MCF 10A (cell line): ENCODE measurements at regions of chr20 and their contacts with region 1.

Region 1: GRCh38 chr20:35699127-35699975 is at the starts of genes NFS1 and ROMO1:
- DNase-seq: peak; percentile 85
- H3K4me3 Mint-ChIP-seq: peak within 1 kb of the TSS; percentile 98
- H3K27ac Mint-ChIP-seq: peak within 1 kb of the TSS; percentile 99
- H3K4me1 Mint-ChIP-seq: peaks cover 19% of the 10 kb centered on the region
- H3K27me3 Mint-ChIP-seq: no peaks in the 10 kb centered on the region
- CTCF ChIP-seq: no peak
- total RNA-seq, gene NFS1: 27.6 and 28.6 TPM in 2 replicates
- total RNA-seq, gene ROMO1: 173 and 192 TPM in 2 replicates

Region 2: DNA sequence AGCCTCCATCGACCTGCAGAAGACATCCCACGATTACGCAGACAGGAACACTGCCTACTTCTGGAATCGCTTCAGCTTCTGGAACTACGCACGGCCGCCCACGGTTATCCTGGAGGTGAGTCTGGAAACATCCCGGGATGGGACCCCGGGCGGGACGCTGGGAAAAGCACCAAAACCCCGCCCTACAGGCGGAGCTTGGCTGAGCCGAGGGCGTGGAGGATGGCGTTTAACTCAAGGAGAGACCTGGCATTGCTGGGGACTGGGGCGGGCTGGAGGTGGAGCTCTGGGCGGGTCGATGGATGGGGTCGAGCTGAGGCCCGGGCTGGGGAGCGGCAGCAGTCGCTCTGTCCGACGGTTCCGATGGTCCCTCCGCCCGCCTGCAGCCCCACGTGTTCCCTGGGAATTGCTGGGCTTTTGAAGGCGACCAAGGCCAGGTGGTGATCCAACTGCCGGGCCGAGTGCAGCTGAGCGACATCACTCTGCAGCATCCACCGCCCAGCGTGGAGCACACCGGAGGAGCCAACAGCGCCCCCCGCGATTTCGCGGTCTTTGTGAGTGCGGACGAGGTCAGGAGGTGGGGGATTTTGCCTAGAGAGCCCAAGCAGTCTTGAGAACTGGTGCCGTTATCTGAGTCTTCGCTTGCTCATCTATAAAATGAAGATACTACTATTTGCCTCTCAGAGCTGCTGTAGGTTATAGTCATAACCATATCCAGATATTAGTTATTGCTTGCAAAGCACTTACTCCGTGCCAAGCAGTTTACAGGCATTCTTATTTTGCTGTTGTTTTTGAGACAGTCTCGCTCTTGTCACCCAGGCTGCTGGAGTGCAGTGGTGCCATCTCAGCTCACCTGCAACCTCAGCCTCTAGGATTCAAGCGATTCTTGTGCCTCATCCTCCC is 79.9 kb before region 1 on chr20:
- CTCF ChIA-PET with region 1: no interaction called
- POLR2A ChIA-PET with region 1: interaction called, 11 read pairs
- intact Hi-C with region 1: no loop called
- DNase-seq: peak; percentile 91
- H3K4me3 Mint-ChIP-seq: peak overlapping the region; percentile 87
- H3K27ac Mint-ChIP-seq: no peak overlapping the region
- H3K4me1 Mint-ChIP-seq: peaks cover 12% of the 10 kb centered on the region
- H3K27me3 Mint-ChIP-seq: no peaks in the 10 kb centered on the region
- CTCF ChIP-seq: no peak

Region 3: DNA sequence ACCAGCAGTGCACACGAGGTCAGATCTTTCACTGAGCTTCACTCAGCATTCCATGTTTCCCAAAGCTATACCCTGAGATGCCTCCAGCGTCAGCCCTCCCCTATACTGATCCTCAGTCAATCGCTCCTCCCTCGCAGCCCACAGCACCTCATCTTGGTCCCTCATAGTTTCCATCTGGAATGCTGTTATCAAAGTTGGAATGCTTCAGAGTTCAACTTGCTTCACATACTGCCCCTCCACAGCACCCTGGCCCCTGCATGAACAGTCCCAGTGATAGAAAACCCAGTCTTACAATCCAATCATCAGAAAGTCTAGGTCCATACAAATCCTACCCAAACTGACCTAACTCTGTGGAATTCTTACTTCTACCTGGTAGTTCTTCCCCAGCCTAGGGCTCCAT is 63.7 kb before region 1 on chr20:
- CTCF ChIA-PET with region 1: no interaction called
- POLR2A ChIA-PET with region 1: no interaction called
- intact Hi-C with region 1: no loop called
- DNase-seq: no peak
- H3K4me3 Mint-ChIP-seq: no peak overlapping the region
- H3K27ac Mint-ChIP-seq: peak overlapping the region; percentile 66
- H3K4me1 Mint-ChIP-seq: peaks cover 9% of the 10 kb centered on the region
- H3K27me3 Mint-ChIP-seq: no peaks in the 10 kb centered on the region
- CTCF ChIP-seq: no peak

Region 4: GRCh38 chr20:35711588-35712209 is 12.3 kb after region 1 on chr20:
- CTCF ChIA-PET with region 1: interaction called, 3 read pairs
- POLR2A ChIA-PET with region 1: interaction called, 130 read pairs
- intact Hi-C with region 1: no loop called
- DNase-seq: no peak
- H3K4me3 Mint-ChIP-seq: no peak overlapping the region
- H3K27ac Mint-ChIP-seq: peak overlapping the region; percentile 28
- H3K4me1 Mint-ChIP-seq: peaks cover 13% of the 10 kb centered on the region
- H3K27me3 Mint-ChIP-seq: no peaks in the 10 kb centered on the region
- CTCF ChIP-seq: no peak

Region 5: GRCh38 chr20:35726759-35727711 is 27.7 kb after region 1 on chr20:
- CTCF ChIA-PET with region 1: no interaction called
- POLR2A ChIA-PET with region 1: interaction called, 130 read pairs
- intact Hi-C with region 1: no loop called
- DNase-seq: no peak
- H3K4me3 Mint-ChIP-seq: no peak overlapping the region
- H3K27ac Mint-ChIP-seq: no peak overlapping the region
- H3K4me1 Mint-ChIP-seq: peaks cover 12% of the 10 kb centered on the region
- H3K27me3 Mint-ChIP-seq: no peaks in the 10 kb centered on the region
- CTCF ChIP-seq: no peak

Region 6: GRCh38 chr20:35771689-35772562 is 72.6 kb after region 1 on chr20 and contains the start of gene PHF20:
- CTCF ChIA-PET with region 1: no interaction called
- POLR2A ChIA-PET with region 1: interaction called, 14 read pairs
- intact Hi-C with region 1: no loop called
- DNase-seq: peak; percentile 92
- H3K4me3 Mint-ChIP-seq: peak within 1 kb of the TSS; percentile 91
- H3K27ac Mint-ChIP-seq: peak within 1 kb of the TSS; percentile 97
- H3K4me1 Mint-ChIP-seq: peaks cover 51% of the 10 kb centered on the region
- H3K27me3 Mint-ChIP-seq: no peaks in the 10 kb centered on the region
- CTCF ChIP-seq: no peak
- total RNA-seq, gene PHF20: 64.2 and 74.7 TPM in 2 replicates